ENCODE measurements at regions of chr2 and their contacts with region 1.

Region 1: GRCh38 chr2:85199698-85200097 is 66.5 kb downstream of the TCF7L1 start:
- DNase-seq: no peak
- CTCF ChIP-seq: no peak

Region 2: DNA sequence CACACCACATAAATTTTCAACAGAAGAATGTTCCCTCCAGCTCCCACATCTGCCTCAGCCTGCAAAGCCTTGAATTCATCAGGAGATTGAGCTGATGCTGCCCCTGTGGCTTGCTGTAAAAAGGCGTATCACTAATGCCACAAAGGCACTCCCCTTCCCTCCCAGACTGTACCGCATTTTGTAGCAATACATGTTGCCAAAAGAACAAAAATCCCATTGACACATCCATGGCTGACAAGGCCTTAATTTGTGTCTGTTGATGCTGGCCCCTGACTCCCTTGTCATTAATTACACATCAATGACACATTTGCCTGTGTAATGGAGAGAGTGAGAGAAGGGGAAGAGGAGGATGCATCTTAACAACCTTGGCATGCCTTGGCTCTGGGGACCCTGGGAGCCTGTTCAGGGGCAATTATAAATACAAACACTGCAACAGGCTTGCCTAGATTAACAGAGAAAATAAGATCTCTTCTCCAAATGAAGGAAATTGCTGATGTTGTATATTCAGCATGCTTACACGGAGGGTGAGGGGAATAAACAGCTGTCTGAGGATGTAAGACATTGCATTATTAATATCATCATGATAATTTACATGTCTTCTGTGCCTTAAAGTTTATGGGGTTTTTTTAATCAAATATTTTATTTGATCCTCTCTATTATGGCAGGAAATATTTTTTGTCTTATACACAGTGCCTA is 1004.6 kb before region 1 on chr2:
- in situ Hi-C with region 1: no loop called
- DNase-seq: no peak
- CTCF ChIP-seq: no peak

Region 3: DNA sequence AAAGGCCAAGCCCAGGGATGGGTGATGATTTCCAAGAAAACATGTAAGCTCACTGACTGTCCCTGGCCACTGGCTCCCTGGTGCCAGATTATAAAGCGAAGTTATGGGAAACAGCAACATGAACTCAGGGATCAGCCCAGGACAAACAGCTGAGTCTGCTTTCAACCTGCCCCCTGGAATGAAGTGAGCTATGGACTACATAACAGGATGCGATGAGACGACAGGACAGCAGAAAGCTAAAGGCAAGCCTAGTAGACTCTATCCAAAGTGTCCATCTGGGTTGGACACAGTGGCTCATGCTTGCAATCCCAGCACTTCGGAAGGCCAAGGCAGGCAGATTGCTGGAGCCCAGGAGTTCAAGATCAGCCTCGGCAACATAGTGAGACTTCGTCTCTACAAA is 245.4 kb before region 1 on chr2:
- in situ Hi-C with region 1: no loop called
- DNase-seq: no peak
- CTCF ChIP-seq: no peak

Region 4: DNA sequence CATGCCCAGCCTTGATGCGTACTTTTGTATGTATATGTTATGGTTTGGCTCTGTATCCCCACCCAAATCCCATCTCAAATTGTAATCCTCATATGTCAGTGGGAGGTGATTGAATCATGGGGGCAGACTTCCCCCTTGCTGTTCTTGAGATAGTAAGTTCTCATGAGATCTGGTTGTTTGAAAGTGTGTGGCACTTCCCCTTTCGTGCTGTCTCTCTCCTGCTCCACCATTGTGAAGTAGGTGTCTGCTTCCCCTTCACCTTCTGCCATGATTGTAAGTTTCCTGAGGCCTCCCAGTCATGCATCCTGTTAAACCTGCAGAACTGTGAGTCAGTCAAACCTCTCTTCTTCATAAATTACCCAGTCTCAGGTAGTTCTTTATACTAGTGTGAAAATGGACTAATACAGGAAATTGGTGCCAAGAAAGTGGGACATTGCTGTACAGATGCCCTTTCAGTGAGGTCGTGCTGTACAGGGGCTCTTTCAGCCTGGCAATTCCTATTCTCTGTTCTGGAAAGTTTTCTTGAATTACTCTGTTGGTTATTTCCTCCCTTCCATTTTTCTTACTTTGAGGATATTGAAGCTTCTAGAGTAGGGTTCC is 190.6 kb before region 1 on chr2:
- in situ Hi-C with region 1: no loop called
- DNase-seq: no peak
- CTCF ChIP-seq: no peak

Region 5: GRCh38 chr2:85255813-85256594 is 56.3 kb after region 1 on chr2:
- in situ Hi-C with region 1: loop called (anchors 5 kb)
- DNase-seq: no peak
- CTCF ChIP-seq: no peak

Measured in GM13977 (cell line).